Tibial artery (tissue), 4 donors: ENCODE measurements at regions of chr17 and their contacts with region 1.

Region 1: DNA sequence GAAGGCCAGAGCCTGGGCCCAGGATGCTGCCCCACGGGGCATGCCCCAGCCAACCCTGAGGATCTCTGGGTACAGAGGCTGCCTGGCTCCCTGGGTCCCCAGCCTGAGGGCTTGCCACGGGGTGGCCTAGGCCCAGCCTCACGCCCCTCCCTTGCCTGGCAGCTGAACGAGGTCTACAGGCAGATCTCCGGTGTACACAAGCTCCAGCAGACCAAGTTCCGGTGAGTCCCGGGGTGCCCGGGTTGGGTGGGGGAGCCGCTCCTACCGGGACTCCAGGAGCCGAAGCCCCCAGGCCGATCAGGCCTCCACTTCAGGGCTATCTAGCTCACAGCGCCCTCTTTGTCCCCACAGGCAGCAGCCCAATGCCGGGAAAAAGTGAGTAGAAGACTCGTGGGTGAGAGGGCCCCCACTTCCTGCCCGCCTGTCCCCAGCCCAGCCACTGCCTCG is 19.4 kb downstream of the ITGB4 start:
- DNase-seq: peak in 1 of 2 donors; percentile 57
- H3K4me3 ChIP-seq: no peak overlapping the region
- H3K27ac ChIP-seq: no peak overlapping the region
- H3K4me1 ChIP-seq: no peaks in the 10 kb centered on the region
- H3K27me3 ChIP-seq: peaks cover 0 to 19% of the 10 kb centered on the region in 2 donors
- CTCF ChIP-seq: no peak

Region 2: DNA sequence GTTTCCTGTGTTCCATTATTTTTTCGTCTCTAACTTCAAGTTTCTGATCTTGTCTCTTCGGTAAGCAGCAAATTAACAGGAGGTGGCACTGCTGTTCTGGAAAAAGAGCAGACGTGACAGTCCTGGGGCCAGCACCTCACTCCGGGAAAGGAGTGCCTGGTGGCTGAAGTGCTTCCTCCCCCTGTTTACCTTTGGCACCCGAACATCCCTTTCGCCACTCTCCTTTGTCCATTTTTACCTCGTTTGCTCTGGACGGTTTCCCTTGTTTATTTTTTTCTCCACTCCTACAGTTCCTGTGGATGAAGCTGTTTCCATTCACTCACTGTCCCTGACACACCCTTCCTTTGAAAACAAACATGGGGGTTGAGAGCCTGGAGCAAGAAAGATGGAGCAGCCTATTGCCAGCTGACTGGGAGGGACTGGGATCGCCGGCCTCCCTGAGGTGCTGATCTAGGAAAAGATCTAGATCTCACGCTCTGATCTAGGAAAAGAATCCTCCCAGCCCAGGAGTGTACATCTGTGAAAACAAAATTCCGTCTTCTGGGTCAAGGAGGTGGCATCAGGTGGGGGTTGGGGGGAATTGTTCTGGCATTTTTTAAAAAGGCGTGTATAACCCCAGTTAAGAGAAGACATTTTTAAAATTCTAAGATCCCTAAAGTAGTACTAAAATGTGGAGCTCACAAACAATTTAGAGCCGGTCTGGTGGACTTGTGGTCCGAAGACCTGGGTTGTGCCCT is 60.8 kb before region 1 on chr17:
- intact Hi-C with region 1: loop called (anchors 5 kb)
- DNase-seq: no peak
- H3K4me3 ChIP-seq: no peak overlapping the region
- H3K27ac ChIP-seq: no peak overlapping the region
- H3K4me1 ChIP-seq: peaks cover 0 to 32% (median 10%) of the 10 kb centered on the region in 4 donors
- H3K27me3 ChIP-seq: no peaks in the 10 kb centered on the region
- CTCF ChIP-seq: peak in 1 of 2 experiments; percentile 5